Activated naive CD4-positive, alpha-beta T cell treated with anti-CD3 and anti-CD28 coated beads for 36 hours (primary cell): ENCODE measurements at regions of chr17 and their contacts with region 1.

Region 1: GRCh38 chr17:794876-795275 is 12.7 kb downstream of the MRM3 start:
- DNase-seq: peak; percentile 64
- H3K4me3 Mint-ChIP-seq: no peak overlapping the region
- H3K27ac Mint-ChIP-seq: no peak overlapping the region
- H3K4me1 Mint-ChIP-seq: peaks cover 6% of the 10 kb centered on the region
- H3K27me3 Mint-ChIP-seq: no peaks in the 10 kb centered on the region

Region 2: GRCh38 chr17:1055751-1056645 is 261.1 kb after region 1 on chr17:
- CTCF ChIA-PET with region 1: no interaction called
- intact Hi-C with region 1: loop called (anchors 5 kb)
- DNase-seq: peak; percentile 64
- H3K4me3 Mint-ChIP-seq: no peak overlapping the region
- H3K27ac Mint-ChIP-seq: no peak overlapping the region
- H3K4me1 Mint-ChIP-seq: no peaks in the 10 kb centered on the region
- H3K27me3 Mint-ChIP-seq: no peaks in the 10 kb centered on the region